ENCODE measurements at regions of chr2 and their contacts with region 1.

Region 1: DNA sequence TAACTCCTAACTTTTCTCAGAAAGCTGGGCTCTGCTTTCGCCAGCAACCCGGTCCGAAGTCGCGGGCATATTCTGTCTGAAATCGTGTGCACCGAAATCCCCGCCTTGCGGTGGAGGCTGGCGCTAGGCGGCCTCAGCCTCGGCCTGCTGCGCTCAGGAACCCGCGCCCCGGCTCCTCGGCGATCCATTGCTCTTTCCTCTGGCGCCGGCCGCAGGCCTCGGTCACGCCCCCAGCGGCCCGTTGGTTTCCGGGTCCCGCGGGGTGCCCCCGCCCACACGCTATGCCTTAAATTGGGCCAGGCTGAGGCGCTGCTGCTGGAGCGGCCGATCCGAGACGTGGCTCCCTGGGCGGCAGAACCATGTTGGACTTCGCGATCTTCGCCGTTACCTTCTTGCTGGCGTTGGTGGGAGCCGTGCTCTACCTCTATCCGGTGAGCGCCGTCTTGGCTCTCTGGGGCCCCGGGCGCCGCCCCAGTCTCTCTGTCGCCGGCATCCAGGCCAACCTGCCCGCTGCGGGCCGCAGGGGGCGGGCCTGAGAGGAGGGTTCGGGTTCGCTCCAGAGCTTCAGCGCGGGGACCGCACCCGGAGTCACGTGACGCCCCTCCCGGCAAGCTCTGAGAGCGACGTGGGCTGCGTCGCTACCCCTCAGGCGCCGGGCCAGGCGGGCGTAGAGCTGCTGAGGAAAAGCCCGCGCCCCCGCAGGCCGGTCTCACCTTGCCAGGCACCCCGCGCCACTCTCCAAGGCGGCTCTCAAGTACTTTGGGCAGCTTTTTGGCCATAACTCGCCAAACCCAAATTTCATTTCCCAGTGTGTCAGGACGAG is at the start of gene CYP20A1:
- DNase-seq: peak; percentile 79
- ATAC-seq: peak; percentile 93
- H3K4me3 ChIP-seq: peak within 1 kb of the TSS; percentile 95
- H3K27ac ChIP-seq: peak within 1 kb of the TSS; percentile 96
- H3K4me1 ChIP-seq: peaks cover 3% of the 10 kb centered on the region; the same call in 1 of the 2 replicates
- H3K27me3 ChIP-seq: no peaks in the 10 kb centered on the region
- CTCF ChIP-seq: peak in 2 of 3 experiments; percentile 16 to 32; a peak in 2 of 6 replicates
- EP300 ChIP-seq: no peak
- POLR2A ChIP-seq: peak; percentile 100
- RAD21 ChIP-seq: no peak
- polyA plus RNA-seq, gene CYP20A1: 15.1 to 19.1 TPM

Region 2: DNA sequence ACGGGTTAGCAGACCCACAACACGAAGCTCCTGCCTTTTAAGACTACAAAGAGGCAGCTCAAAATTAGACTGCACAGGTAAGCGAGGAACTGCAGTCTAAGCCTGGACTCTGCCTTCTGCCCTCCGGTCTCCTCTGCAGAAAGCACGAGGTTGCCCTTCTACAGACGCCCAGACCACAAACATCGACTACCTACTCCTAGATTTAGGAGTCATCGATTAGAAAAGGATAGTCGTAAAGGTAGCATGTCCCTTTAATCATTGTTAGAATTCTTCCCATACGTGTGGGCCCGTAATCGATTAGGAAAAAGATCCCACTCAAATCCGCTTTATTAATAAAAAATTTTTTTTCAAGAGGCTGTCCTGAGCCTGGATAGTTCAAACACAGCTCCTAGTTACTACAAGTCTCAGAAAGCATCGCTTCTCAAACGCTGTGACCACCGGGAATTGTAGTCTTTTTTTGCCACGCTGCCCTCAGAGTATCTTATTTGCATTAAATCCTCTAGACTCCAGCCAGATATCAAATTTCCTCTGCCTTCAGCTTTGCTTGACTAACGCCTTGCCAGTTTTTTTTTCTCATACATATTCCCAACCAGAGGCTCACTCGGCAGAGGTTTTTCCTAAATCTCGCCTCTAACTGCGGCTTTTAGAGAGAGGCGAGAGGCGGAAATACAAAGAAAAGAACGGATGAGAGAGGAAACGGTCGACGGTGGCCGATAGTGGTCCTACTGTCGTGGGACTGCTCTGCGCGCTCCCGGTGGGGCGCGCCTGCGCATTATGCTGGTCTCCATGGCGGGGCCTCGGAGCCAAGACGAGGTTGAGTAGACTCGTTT is 327.2 kb before region 1 on chr2 and contains the starts of genes CARF and WDR12:
- CTCF ChIA-PET with region 1: interaction called, 3 read pairs
- POLR2A ChIA-PET with region 1: interaction called, 11 read pairs
- RAD21 ChIA-PET with region 1: interaction called, 8 read pairs
- SMC1A ChIA-PET with region 1: no interaction called
- in situ Hi-C with region 1: no loop called
- intact Hi-C with region 1: loop called (anchors 2 kb)
- DNase-seq: peak; percentile 82
- ATAC-seq: peak; percentile 88
- H3K4me3 ChIP-seq: peak within 1 kb of the TSS; percentile 95
- H3K27ac ChIP-seq: peak within 1 kb of the TSS; percentile 93
- H3K4me1 ChIP-seq: peaks cover 5% of the 10 kb centered on the region
- H3K27me3 ChIP-seq: no peaks in the 10 kb centered on the region
- CTCF ChIP-seq: no peak
- EP300 ChIP-seq: no peak
- POLR2A ChIP-seq: peak; percentile 80
- RAD21 ChIP-seq: no peak
- polyA plus RNA-seq, gene CARF: 1.8 to 2.8 TPM
- polyA plus RNA-seq, gene WDR12: 214 to 256 TPM

Region 3: GRCh38 chr2:203014456-203015199 is 224.3 kb before region 1 on chr2 and contains the start of gene NBEAL1:
- CTCF ChIA-PET with region 1: interaction called, 7 read pairs
- POLR2A ChIA-PET with region 1: interaction called, 4 read pairs
- RAD21 ChIA-PET with region 1: interaction called, 3 read pairs
- SMC1A ChIA-PET with region 1: interaction called, 4 read pairs
- in situ Hi-C with region 1: no loop called
- intact Hi-C with region 1: loop called (anchors 2 kb)
- DNase-seq: peak; percentile 94
- ATAC-seq: peak; percentile 92
- H3K4me3 ChIP-seq: peak within 1 kb of the TSS; percentile 96
- H3K27ac ChIP-seq: peak within 1 kb of the TSS; percentile 91
- H3K4me1 ChIP-seq: peaks cover 3% of the 10 kb centered on the region; the same call in 1 of the 2 replicates
- H3K27me3 ChIP-seq: no peaks in the 10 kb centered on the region
- CTCF ChIP-seq: no peak
- EP300 ChIP-seq: no peak
- POLR2A ChIP-seq: peak; percentile 82
- RAD21 ChIP-seq: no peak
- polyA plus RNA-seq, gene NBEAL1: 1.9 to 3.6 TPM

Region 4: DNA sequence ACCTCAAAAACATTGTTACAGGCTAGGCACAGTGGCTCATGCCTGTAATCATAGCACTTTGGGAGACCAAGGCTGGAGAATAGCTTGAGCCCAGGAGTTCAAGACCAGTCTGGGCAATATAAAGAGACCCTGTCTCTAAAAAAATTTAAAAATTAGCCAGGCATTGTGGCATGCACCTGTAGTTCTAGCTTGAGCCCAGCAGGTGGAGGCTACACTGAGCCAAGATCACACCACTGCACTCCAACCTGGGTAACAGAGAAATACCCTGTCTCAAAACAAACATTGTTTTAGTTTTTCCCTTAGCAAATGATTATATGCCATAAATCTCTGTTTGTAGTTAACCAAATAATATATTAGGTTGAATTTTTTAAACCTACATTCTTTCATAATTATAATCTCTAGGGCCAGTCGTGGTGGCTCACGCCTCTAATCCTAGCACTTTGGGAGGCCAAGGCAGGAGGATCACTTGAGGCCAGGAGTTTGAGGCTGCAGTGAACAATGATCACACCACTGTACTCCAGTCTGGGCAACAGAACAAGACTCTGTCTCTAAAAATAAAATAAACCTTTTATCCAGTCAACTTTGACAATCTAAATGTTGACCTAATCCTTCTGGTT is 13.4 kb before region 1 on chr2:
- CTCF ChIA-PET with region 1: interaction called, 31 read pairs
- POLR2A ChIA-PET with region 1: no interaction called
- RAD21 ChIA-PET with region 1: interaction called, 5 read pairs
- SMC1A ChIA-PET with region 1: interaction called, 16 read pairs
- in situ Hi-C with region 1: no loop called
- intact Hi-C with region 1: no loop called
- DNase-seq: no peak
- ATAC-seq: peak; percentile 92
- H3K4me3 ChIP-seq: no peak overlapping the region
- H3K27ac ChIP-seq: no peak overlapping the region
- H3K4me1 ChIP-seq: no peaks in the 10 kb centered on the region
- H3K27me3 ChIP-seq: no peaks in the 10 kb centered on the region
- CTCF ChIP-seq: peak; percentile 42 to 76 (median 69)
- EP300 ChIP-seq: no peak
- POLR2A ChIP-seq: no peak
- RAD21 ChIP-seq: peak; percentile 59

Region 5: GRCh38 chr2:203327901-203328759 is 89.2 kb after region 1 on chr2 and contains the start of gene ABI2:
- CTCF ChIA-PET with region 1: no interaction called
- POLR2A ChIA-PET with region 1: interaction called, 8 read pairs
- RAD21 ChIA-PET with region 1: no interaction called
- SMC1A ChIA-PET with region 1: interaction called, 3 read pairs
- in situ Hi-C with region 1: no loop called
- intact Hi-C with region 1: loop called (anchors 2 kb)
- DNase-seq: no peak
- ATAC-seq: peak; percentile 80
- H3K4me3 ChIP-seq: peak within 1 kb of the TSS; percentile 81
- H3K27ac ChIP-seq: peak within 1 kb of the TSS; percentile 45
- H3K4me1 ChIP-seq: no peaks in the 10 kb centered on the region
- H3K27me3 ChIP-seq: no peaks in the 10 kb centered on the region
- CTCF ChIP-seq: no peak
- EP300 ChIP-seq: no peak
- POLR2A ChIP-seq: peak; percentile 50
- RAD21 ChIP-seq: no peak
- polyA plus RNA-seq, gene ABI2: 8.9 to 14.2 TPM

Region 6: DNA sequence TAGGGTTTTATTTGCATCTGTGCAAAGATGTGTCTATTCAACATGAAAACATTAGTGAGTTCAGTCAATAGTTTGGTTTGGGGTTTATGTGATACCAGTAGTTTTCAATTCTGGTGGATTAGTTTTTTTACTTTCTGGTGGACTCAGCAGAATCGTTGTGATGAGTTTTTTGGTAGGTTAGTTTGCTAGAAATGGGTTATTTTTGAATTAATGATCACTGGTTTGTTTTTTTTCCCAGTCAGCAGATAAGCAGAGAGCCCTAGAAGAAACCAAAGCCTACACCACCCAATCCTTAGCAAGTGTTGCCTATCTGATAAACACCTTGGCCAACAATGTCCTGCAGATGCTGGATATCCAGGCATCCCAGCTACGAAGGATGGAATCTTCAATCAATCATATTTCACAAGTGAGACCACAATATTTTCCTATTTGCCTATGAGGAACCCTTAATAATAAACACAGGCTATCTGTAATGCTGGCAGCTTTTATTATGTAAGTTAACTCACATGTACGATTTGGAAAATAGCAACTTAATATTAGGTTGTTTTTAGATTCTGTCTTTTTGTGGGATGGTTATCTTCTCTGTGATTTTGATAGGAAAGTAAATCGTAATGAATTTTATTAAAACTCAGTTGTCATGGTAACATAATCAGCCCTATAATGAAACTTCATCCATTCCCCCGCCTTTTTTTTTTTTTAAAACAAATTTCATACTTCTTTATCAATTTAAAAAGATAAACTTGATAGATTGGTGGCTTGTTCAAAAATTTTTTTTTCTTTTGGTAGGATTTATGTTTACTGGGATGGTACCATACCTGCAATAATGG is 127.9 kb after region 1 on chr2:
- CTCF ChIA-PET with region 1: no interaction called
- POLR2A ChIA-PET with region 1: no interaction called
- RAD21 ChIA-PET with region 1: no interaction called
- SMC1A ChIA-PET with region 1: no interaction called
- in situ Hi-C with region 1: no loop called
- intact Hi-C with region 1: no loop called
- DNase-seq: no peak
- ATAC-seq: no peak
- H3K4me3 ChIP-seq: no peak overlapping the region
- H3K27ac ChIP-seq: no peak overlapping the region
- H3K4me1 ChIP-seq: no peaks in the 10 kb centered on the region
- H3K27me3 ChIP-seq: no peaks in the 10 kb centered on the region
- CTCF ChIP-seq: no peak
- EP300 ChIP-seq: no peak
- POLR2A ChIP-seq: no peak
- RAD21 ChIP-seq: no peak

Region 7: GRCh38 chr2:203814661-203815540 is 576.0 kb after region 1 on chr2:
- CTCF ChIA-PET with region 1: no interaction called
- POLR2A ChIA-PET with region 1: no interaction called
- RAD21 ChIA-PET with region 1: no interaction called
- SMC1A ChIA-PET with region 1: no interaction called
- in situ Hi-C with region 1: loop called (anchors 25 kb)
- intact Hi-C with region 1: no loop called
- DNase-seq: no peak
- ATAC-seq: peak; percentile 91
- H3K4me3 ChIP-seq: no peak overlapping the region
- H3K27ac ChIP-seq: no peak overlapping the region
- H3K4me1 ChIP-seq: peaks cover 6% of the 10 kb centered on the region
- H3K27me3 ChIP-seq: peaks cover 0 to under 1% of the 10 kb centered on the region in 2 experiments; a peak in 1 of 4 replicates
- CTCF ChIP-seq: peak; percentile 55 to 80 (median 66); a peak in 5 of 6 replicates
- EP300 ChIP-seq: no peak
- POLR2A ChIP-seq: no peak
- RAD21 ChIP-seq: peak; percentile 89